ENCODE measurements at regions of chr9 and their contacts with region 1.

Region 1: GRCh38 chr9:129333953-129334724 is 156.1 kb upstream of the IER5L start:
- DNase-seq: peak; percentile 92 to 95 (median 94)
- ATAC-seq: peak; percentile 85 to 94 (median 89)
- H3K4me3 ChIP-seq: peak overlapping the region in 9 of 12 donors; percentile 16 to 40 (median 25)
- H3K27ac ChIP-seq: peak overlapping the region; percentile 39 to 97 (median 88)
- H3K4me1 ChIP-seq: peaks cover 12 to 65% (median 43%) of the 10 kb centered on the region in 12 donors
- H3K27me3 ChIP-seq: no peaks in the 10 kb centered on the region
- CTCF ChIP-seq: no peak
- POLR2A ChIP-seq: peak in 1 of 2 donors; percentile 46

Region 2: DNA sequence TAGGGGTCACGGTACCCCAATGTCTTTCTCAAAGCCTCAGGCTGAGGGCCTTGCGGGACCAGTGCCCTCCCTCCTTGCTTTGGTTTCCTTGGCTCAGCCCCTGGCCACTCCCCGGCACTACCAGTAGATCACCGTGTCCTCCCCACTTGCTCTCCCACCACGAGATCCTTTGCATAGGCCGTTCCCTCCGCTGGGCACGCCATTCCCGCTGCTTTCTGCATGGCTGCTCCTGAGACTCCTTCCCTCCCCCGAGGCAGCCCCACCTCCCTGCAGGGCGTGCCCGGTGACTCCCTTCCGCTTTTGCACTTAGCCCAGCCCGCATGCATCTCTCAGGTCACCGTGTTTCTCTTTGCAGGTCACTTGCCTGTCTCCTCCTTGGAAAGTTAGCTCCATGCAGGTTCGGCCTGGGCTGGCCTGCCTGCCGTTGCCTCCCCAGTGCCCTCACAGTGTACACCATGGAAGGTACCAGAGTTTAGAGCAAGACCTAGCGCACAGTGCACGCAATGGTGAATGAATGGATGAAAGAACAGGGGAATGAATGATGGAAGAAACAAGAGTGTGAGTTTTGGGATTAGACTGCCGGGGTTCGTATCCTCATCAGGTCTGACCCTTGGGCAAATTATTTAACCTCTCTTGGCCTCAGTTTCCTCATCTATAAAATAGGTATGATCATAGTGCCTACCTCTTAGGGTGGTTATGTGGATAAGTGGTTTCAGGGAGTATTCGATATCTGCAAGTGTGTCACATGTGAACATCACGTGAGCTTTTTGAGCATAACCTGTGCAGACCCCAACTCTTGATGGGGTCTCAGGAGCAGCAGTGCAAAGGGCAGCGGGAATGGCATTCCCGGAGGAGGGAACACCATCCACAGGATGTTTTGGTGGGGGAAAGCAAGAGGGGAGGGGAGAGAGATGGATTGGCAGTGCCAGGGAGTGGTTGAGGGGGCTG is 72.4 kb after region 1 on chr9:
- intact Hi-C with region 1: loop called in 2 of 10 experiments (anchors 5 kb)
- DNase-seq: peak in 3 of 5 donors; percentile 47 to 68 (median 57)
- ATAC-seq: no peak
- H3K4me3 ChIP-seq: no peak overlapping the region
- H3K27ac ChIP-seq: no peak overlapping the region
- H3K4me1 ChIP-seq: peaks cover 0 to 38% (median 12%) of the 10 kb centered on the region in 12 donors
- H3K27me3 ChIP-seq: no peaks in the 10 kb centered on the region
- CTCF ChIP-seq: no peak
- POLR2A ChIP-seq: no peak

Region 3: DNA sequence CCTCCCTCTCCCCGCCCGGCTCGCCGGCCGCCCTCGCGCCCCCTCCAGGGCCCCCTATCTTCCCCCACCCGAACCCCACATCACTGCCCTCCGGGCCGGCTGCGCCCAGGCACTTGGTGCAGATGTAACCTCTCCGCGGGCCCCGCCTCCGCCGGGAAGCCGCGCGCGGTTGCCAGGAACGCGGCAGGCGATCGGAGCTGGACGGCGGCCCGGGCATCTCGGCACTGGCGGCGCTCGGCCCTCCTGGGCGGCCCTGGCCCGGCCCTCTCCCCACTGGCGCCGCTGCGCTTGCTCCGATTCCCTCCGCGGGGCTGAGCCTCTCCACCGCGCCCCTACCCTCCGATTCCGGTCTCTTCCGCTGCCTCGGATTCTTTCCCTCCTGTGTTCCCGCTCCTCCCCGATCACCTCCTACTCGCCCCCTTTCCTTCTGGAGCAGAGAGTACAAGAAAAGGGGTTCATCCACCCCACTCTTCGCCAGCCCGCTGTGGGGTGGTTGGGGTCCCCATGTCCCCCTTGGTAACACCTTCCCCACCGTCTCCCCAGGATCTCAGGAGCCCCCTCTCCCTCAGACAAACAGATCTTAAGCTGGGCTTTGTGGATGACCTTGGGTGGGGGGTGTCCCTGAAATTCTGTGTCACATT is 216.2 kb after region 1 on chr9:
- intact Hi-C with region 1: no loop called
- DNase-seq: peak; percentile 83 to 90 (median 87)
- ATAC-seq: peak; percentile 55 to 93 (median 86)
- H3K4me3 ChIP-seq: peak overlapping the region; percentile 42 to 66 (median 58)
- H3K27ac ChIP-seq: peak overlapping the region in 11 of 12 donors; percentile 56 to 86 (median 81)
- H3K4me1 ChIP-seq: peaks cover 0 to 31% (median 24%) of the 10 kb centered on the region in 12 donors
- H3K27me3 ChIP-seq: peaks cover 0 to 14% (median 0%) of the 10 kb centered on the region in 9 donors
- CTCF ChIP-seq: peak in 1 of 12 donors; percentile 8
- POLR2A ChIP-seq: no peak

Measured in heart left ventricle (tissue), 16 donors.